GM12878 (cell line): ENCODE measurements at regions of chr12 and their contacts with region 1.

Region 1: DNA sequence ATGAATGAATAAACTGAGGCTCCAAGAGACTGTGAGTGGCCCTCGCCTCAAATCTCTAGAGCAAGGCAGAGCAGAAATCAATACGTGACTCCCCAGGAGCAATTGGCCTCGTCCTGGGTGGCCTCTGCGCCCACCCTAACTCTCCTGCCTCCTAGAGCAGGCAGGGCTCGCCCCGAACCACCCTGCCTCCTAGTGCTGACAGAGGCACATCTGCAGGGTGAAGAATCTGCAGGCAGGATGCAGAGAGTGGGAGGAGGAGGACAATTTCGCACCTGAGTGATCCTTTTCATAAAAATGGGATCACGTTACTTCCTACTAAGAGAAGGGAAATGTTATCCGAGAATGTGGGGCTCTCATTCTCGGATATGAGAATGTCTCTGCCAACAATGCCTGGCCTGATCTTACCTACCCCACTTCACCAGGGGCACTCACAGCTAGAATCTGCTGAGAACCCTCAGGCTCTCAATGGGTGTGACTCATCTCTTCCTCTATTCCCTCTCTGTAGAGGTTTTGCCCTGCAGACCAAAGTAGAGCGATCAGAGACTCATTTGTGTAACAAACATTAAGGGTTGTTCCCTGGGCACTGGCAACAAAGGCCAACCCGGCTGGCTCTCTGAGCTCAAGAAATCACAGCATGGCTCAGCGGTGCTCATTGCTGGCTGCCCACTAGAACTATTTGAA is 61.7 kb upstream of the BCL2L14 start:
- DNase-seq: peak; percentile 86
- ATAC-seq: peak; percentile 63
- H3K4me3 ChIP-seq: no peak overlapping the region
- H3K27ac ChIP-seq: peak overlapping the region; percentile 90
- H3K4me1 ChIP-seq: peaks cover 57% of the 10 kb centered on the region
- H3K27me3 ChIP-seq: no peaks in the 10 kb centered on the region
- CTCF ChIP-seq: peak; percentile 33 to 45 (median 41); a peak in 5 of 6 replicates
- EP300 ChIP-seq: no peak; a peak in 1 of 4 replicates
- POLR2A ChIP-seq: no peak
- RAD21 ChIP-seq: peak; percentile 71

Region 2: DNA sequence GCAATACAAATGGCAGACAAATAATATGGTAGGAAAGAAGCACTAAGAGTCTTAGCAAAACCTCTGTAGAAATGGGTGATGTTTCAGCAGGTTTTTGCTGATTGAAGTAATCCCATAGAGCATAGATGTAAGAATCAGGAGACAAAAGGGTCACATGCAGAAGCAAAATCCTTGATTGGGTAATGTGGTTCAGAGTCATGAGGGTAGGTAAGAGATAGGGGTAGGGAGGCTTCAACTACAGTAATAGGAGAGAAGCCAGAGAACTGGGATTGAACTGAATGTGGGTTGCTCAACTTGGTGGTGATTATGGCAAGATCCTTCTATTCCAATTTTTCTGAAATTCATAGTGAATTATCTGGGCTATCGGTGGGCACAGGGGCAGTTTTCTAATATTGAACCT is 744.6 kb before region 1 on chr12:
- CTCF ChIA-PET with region 1: no interaction called
- POLR2A ChIA-PET with region 1: no interaction called
- RAD21 ChIA-PET with region 1: no interaction called
- SMC1A ChIA-PET with region 1: no interaction called
- in situ Hi-C with region 1: no loop called
- intact Hi-C with region 1: no loop called
- DNase-seq: no peak
- ATAC-seq: no peak
- H3K4me3 ChIP-seq: no peak overlapping the region
- H3K27ac ChIP-seq: no peak overlapping the region
- H3K4me1 ChIP-seq: no peaks in the 10 kb centered on the region
- H3K27me3 ChIP-seq: no peaks in the 10 kb centered on the region
- CTCF ChIP-seq: no peak
- EP300 ChIP-seq: no peak
- POLR2A ChIP-seq: no peak
- RAD21 ChIP-seq: no peak

Region 3: DNA sequence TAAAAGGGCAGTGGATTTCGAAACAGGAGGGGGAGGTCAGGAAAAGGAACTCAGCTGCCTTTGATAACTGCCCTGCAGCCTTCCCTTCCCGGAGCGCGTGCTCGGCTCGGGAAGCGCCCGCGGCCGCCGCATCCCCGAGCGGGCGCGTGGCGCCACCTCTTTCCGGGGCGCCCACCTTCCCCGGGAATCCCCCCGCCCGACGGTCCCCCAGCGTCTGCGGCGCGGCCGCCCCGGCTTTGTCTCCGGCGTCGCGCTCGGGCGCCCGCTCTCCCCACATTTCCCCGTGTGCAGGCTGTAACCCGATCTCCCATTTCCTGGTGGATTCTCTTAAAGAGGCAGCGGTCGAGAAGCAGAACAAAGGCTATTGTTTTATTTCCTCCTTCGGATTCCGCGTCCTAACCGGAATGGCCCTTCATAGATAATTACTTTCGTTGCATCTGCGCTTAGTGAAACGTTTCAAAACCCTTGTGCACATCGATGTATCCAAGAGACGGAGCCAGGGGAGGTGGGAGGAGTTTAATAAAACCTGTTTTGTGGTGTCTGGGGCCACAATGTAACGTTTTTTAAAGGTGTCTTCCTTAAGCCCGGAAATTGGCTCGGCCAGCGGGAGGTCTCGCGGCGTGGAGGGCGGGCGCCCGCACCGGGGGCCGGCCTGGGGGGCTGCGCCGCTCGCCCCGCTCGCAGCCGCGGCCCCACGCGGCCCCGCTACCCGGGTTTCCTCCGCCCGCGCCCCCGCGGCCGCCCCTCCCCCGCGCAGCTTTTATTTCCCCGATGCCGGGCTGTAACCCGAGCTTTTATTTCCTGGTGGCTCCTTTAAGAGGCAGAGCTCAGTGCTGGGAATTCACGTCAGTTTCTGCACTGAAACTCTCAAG is 360.0 kb before region 1 on chr12 and contains the start of gene ETV6:
- CTCF ChIA-PET with region 1: interaction called, 3 read pairs
- POLR2A ChIA-PET with region 1: no interaction called
- RAD21 ChIA-PET with region 1: interaction called, 6 read pairs
- SMC1A ChIA-PET with region 1: interaction called, 3 read pairs
- in situ Hi-C with region 1: no loop called
- intact Hi-C with region 1: loop called (anchors 5 kb)
- DNase-seq: peak; percentile 86
- ATAC-seq: peak; percentile 31
- H3K4me3 ChIP-seq: peak within 1 kb of the TSS; percentile 85
- H3K27ac ChIP-seq: peak within 1 kb of the TSS; percentile 99
- H3K4me1 ChIP-seq: peaks cover 3% of the 10 kb centered on the region; the same call in 1 of the 2 replicates
- H3K27me3 ChIP-seq: no peaks in the 10 kb centered on the region
- CTCF ChIP-seq: no peak
- EP300 ChIP-seq: peak; percentile 33 to 46; a peak in 3 of 4 replicates
- POLR2A ChIP-seq: peak; percentile 80
- RAD21 ChIP-seq: no peak; the same call in 1 of the 2 replicates
- polyA plus RNA-seq, gene ETV6: 6.6 to 10.4 TPM

Region 4: GRCh38 chr12:11827091-11828061 is 181.7 kb before region 1 on chr12:
- CTCF ChIA-PET with region 1: interaction called, 28 read pairs
- POLR2A ChIA-PET with region 1: no interaction called
- RAD21 ChIA-PET with region 1: interaction called, 12 read pairs
- SMC1A ChIA-PET with region 1: interaction called, 20 read pairs
- in situ Hi-C with region 1: no loop called
- intact Hi-C with region 1: no loop called
- DNase-seq: no peak
- ATAC-seq: no peak
- H3K4me3 ChIP-seq: no peak overlapping the region
- H3K27ac ChIP-seq: 0 out of 2 replicates have a peak overlapping the region, but pooled peaks have one; percentile 6
- H3K4me1 ChIP-seq: peaks cover 64% of the 10 kb centered on the region
- H3K27me3 ChIP-seq: no peaks in the 10 kb centered on the region
- CTCF ChIP-seq: no peak
- EP300 ChIP-seq: no peak
- POLR2A ChIP-seq: no peak
- RAD21 ChIP-seq: no peak

Region 5: GRCh38 chr12:11906286-11906935 is 102.7 kb before region 1 on chr12:
- CTCF ChIA-PET with region 1: no interaction called
- POLR2A ChIA-PET with region 1: no interaction called
- RAD21 ChIA-PET with region 1: no interaction called
- SMC1A ChIA-PET with region 1: no interaction called
- in situ Hi-C with region 1: no loop called
- intact Hi-C with region 1: loop called (anchors 5 kb)
- DNase-seq: no peak
- ATAC-seq: no peak
- H3K4me3 ChIP-seq: no peak overlapping the region
- H3K27ac ChIP-seq: peak overlapping the region; percentile 35; the same call in 1 of the 2 replicates
- H3K4me1 ChIP-seq: peaks cover 20% of the 10 kb centered on the region
- H3K27me3 ChIP-seq: no peaks in the 10 kb centered on the region
- CTCF ChIP-seq: no peak
- EP300 ChIP-seq: no peak
- POLR2A ChIP-seq: no peak
- RAD21 ChIP-seq: no peak

Region 6: DNA sequence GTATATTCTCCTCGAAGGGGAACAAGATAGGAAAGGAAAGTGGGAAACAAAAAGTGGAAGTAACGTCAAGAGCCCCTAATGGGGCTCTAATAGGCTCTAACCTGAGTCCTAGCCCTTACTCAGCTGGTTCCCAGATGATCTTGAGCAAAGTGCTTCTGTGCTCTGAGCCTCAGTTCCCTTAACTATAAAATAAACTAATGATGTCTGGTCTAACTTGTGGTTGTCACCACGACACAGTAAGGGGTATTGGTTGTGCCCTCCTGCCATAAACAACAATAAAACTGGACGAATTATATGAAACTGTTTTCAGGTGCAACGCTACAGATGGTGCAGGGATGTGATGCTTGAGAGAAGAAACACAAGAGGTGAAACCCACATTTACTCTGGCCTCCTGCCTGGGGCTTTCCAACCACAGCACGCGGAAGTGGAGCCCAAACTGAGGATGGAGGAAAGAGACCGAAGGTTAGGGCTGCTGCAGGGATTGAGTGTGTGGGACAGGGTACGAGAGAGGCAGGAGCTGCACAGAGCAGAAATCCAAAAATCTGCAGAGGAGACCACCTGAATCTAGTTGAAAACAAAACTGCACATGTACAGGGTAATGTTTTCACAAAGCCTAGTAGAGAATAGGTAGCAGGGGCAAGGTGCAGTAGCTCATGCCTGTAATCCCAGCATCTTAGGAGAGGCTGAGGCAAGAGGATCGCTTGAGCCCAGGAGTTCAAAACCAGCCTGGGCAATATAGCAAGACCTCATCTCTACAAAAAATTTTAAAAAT is 16.0 kb after region 1 on chr12:
- CTCF ChIA-PET with region 1: interaction called, 19 read pairs
- POLR2A ChIA-PET with region 1: interaction called, 6 read pairs
- RAD21 ChIA-PET with region 1: interaction called, 44 read pairs
- SMC1A ChIA-PET with region 1: interaction called, 26 read pairs
- in situ Hi-C with region 1: no loop called
- intact Hi-C with region 1: loop called (anchors 1 kb)
- DNase-seq: peak; percentile 93
- ATAC-seq: peak; percentile 83
- H3K4me3 ChIP-seq: peak overlapping the region; percentile 4
- H3K27ac ChIP-seq: peak overlapping the region; percentile 74
- H3K4me1 ChIP-seq: peaks cover 40% of the 10 kb centered on the region
- H3K27me3 ChIP-seq: no peaks in the 10 kb centered on the region
- CTCF ChIP-seq: no peak
- EP300 ChIP-seq: peak; percentile 92 to 94
- POLR2A ChIP-seq: no peak
- RAD21 ChIP-seq: no peak